ENCODE measurements at regions of chr12 and their contacts with region 1.

Region 1: GRCh38 chr12:121015825-121016766 is at the start of gene C12orf43:
- DNase-seq: peak; percentile 83 to 95 (median 92)
- ATAC-seq: peak; percentile 97
- H3K4me3 ChIP-seq: peak within 1 kb of the TSS; percentile 69 to 91
- H3K4me3 Mint-ChIP-seq: peak within 1 kb of the TSS; percentile 93
- H3K27ac ChIP-seq: peak within 1 kb of the TSS; percentile 60 to 89
- H3K27ac Mint-ChIP-seq: peak within 1 kb of the TSS; percentile 93
- H3K4me1 ChIP-seq: peaks cover 8% of the 10 kb centered on the region
- H3K4me1 Mint-ChIP-seq: peaks cover 21% of the 10 kb centered on the region
- H3K27me3 ChIP-seq: no peaks in the 10 kb centered on the region
- H3K27me3 Mint-ChIP-seq: no peaks in the 10 kb centered on the region
- CTCF ChIP-seq: no peak
- total RNA-seq, gene C12orf43: 20.7 to 21.4 TPM

Region 2: GRCh38 chr12:120562906-120563305 is 453.2 kb before region 1 on chr12:
- CTCF ChIA-PET with region 1: no interaction called
- POLR2A ChIA-PET with region 1: no interaction called
- intact Hi-C with region 1: no loop called
- DNase-seq: no peak
- ATAC-seq: no peak
- H3K4me3 ChIP-seq: no peak overlapping the region
- H3K4me3 Mint-ChIP-seq: no peak overlapping the region
- H3K27ac ChIP-seq: no peak overlapping the region
- H3K27ac Mint-ChIP-seq: peak overlapping the region; percentile 14
- H3K4me1 ChIP-seq: no peaks in the 10 kb centered on the region
- H3K4me1 Mint-ChIP-seq: no peaks in the 10 kb centered on the region
- H3K27me3 ChIP-seq: no peaks in the 10 kb centered on the region
- H3K27me3 Mint-ChIP-seq: no peaks in the 10 kb centered on the region
- CTCF ChIP-seq: no peak

Region 3: DNA sequence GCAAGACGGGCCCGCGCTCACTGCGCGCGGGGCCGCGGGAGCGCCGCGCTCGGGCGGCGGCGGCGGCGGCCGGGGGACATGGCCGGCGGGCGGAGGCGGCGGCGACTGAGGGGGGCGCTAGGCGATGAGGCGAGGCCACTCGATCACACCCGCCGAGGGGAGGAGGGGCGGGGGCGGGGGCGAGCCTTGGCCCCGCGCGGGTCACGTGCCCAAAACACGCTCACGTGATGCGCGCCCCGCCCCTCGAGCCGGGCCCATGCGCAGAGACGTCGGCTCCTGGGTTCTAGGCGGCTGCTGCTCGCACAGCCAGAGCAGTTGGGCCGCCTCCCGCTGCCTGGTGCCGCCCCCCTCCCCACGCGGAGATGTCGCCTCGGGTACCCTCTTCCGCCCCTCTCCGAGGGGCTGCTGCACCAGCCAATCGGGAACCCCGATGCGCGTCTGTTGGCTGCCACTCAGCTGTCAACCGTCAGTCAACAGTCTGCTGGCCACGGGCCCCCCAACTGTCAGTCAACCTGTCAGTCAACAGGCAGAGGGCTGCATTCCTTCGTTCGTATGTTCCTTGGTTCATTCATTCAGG is 111.8 kb before region 1 on chr12 and contains the start of gene SPPL3:
- CTCF ChIA-PET with region 1: no interaction called
- POLR2A ChIA-PET with region 1: no interaction called
- intact Hi-C with region 1: loop called in 1 of 2 experiments (anchors 1 kb)
- DNase-seq: peak; percentile 86 to 96 (median 93)
- ATAC-seq: peak; percentile 75
- H3K4me3 ChIP-seq: peak within 1 kb of the TSS; percentile 76 to 82
- H3K4me3 Mint-ChIP-seq: peak within 1 kb of the TSS; percentile 99
- H3K27ac ChIP-seq: peak within 1 kb of the TSS; percentile 66 to 84
- H3K27ac Mint-ChIP-seq: peak within 1 kb of the TSS; percentile 98
- H3K4me1 ChIP-seq: peaks cover 21% of the 10 kb centered on the region
- H3K4me1 Mint-ChIP-seq: peaks cover 32% of the 10 kb centered on the region
- H3K27me3 ChIP-seq: no peaks in the 10 kb centered on the region
- H3K27me3 Mint-ChIP-seq: no peaks in the 10 kb centered on the region
- CTCF ChIP-seq: no peak
- total RNA-seq, gene SPPL3: 42.3 to 42.9 TPM

Region 4: GRCh38 chr12:121033625-121034349 is 17.7 kb after region 1 on chr12:
- CTCF ChIA-PET with region 1: interaction called, 3 read pairs
- POLR2A ChIA-PET with region 1: no interaction called
- intact Hi-C with region 1: loop called in 1 of 2 experiments (anchors 1 kb)
- DNase-seq: peak in 8 of 9 experiments; percentile 29 to 93 (median 66)
- ATAC-seq: peak; percentile 78
- H3K4me3 ChIP-seq: peak overlapping the region in 1 of 2 experiments; percentile 35
- H3K4me3 Mint-ChIP-seq: peak overlapping the region; percentile 43
- H3K27ac ChIP-seq: peak overlapping the region; percentile 25 to 87
- H3K27ac Mint-ChIP-seq: peak overlapping the region; percentile 85
- H3K4me1 ChIP-seq: peaks cover 58% of the 10 kb centered on the region
- H3K4me1 Mint-ChIP-seq: peaks cover 51% of the 10 kb centered on the region
- H3K27me3 ChIP-seq: no peaks in the 10 kb centered on the region
- H3K27me3 Mint-ChIP-seq: no peaks in the 10 kb centered on the region
- CTCF ChIP-seq: no peak

Region 5: GRCh38 chr12:121038861-121039666 is 23.0 kb after region 1 on chr12 and contains the start of gene OASL:
- CTCF ChIA-PET with region 1: no interaction called
- POLR2A ChIA-PET with region 1: no interaction called
- intact Hi-C with region 1: loop called (anchors 1 kb)
- DNase-seq: peak; percentile 46 to 86 (median 64)
- ATAC-seq: peak; percentile 56
- H3K4me3 ChIP-seq: peak within 1 kb of the TSS; percentile 77 to 84
- H3K4me3 Mint-ChIP-seq: peak within 1 kb of the TSS; percentile 96
- H3K27ac ChIP-seq: peak within 1 kb of the TSS; percentile 58 to 87
- H3K27ac Mint-ChIP-seq: peak within 1 kb of the TSS; percentile 95
- H3K4me1 ChIP-seq: peaks cover 42% of the 10 kb centered on the region
- H3K4me1 Mint-ChIP-seq: peaks cover 45% of the 10 kb centered on the region
- H3K27me3 ChIP-seq: no peaks in the 10 kb centered on the region
- H3K27me3 Mint-ChIP-seq: no peaks in the 10 kb centered on the region
- CTCF ChIP-seq: no peak
- total RNA-seq, gene OASL: 34.5 to 36.5 TPM

Region 6: DNA sequence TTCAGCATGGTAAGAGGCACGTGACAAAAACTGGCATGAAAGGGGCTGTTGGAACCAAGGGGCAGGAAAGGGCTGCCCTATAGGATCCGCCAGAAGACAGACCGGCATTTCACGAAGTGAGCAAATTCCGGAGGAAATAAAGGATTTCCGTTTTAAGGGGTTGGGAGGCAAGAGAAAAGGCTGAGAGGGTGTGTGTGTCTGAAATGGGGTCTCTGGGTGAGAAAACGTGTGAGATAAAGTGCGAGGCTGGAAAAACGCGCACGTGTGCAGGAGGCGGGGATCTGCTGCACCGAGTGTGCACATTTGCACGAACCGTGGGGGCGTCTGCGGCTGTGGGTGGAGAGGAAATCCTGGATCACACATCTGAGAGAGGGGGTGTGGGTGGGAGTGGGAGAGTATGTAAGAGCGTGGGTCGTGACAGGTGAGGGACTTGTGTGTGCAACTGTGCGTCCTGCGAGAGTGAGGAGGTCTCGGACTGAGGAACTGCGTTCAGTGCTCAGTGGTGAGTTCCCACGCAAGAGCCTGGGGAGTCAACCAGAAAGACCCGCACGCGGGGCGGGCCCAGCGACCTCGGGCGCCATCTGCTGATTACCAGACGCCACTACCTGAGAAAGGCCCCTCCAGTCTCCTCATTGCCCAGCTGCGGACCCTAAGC is 79.6 kb after region 1 on chr12:
- CTCF ChIA-PET with region 1: no interaction called
- POLR2A ChIA-PET with region 1: interaction called, 3 read pairs
- intact Hi-C with region 1: loop called (anchors 1 to 5 kb)
- DNase-seq: peak; percentile 59 to 88 (median 81)
- ATAC-seq: peak; percentile 78
- H3K4me3 ChIP-seq: peak overlapping the region; percentile 44 to 47
- H3K4me3 Mint-ChIP-seq: peak overlapping the region; percentile 81
- H3K27ac ChIP-seq: no peak overlapping the region
- H3K27ac Mint-ChIP-seq: no peak overlapping the region
- H3K4me1 ChIP-seq: peaks cover 47% of the 10 kb centered on the region
- H3K4me1 Mint-ChIP-seq: peaks cover 49% of the 10 kb centered on the region
- H3K27me3 ChIP-seq: no peaks in the 10 kb centered on the region
- H3K27me3 Mint-ChIP-seq: no peaks in the 10 kb centered on the region
- CTCF ChIP-seq: peak; percentile 81

Region 7: DNA sequence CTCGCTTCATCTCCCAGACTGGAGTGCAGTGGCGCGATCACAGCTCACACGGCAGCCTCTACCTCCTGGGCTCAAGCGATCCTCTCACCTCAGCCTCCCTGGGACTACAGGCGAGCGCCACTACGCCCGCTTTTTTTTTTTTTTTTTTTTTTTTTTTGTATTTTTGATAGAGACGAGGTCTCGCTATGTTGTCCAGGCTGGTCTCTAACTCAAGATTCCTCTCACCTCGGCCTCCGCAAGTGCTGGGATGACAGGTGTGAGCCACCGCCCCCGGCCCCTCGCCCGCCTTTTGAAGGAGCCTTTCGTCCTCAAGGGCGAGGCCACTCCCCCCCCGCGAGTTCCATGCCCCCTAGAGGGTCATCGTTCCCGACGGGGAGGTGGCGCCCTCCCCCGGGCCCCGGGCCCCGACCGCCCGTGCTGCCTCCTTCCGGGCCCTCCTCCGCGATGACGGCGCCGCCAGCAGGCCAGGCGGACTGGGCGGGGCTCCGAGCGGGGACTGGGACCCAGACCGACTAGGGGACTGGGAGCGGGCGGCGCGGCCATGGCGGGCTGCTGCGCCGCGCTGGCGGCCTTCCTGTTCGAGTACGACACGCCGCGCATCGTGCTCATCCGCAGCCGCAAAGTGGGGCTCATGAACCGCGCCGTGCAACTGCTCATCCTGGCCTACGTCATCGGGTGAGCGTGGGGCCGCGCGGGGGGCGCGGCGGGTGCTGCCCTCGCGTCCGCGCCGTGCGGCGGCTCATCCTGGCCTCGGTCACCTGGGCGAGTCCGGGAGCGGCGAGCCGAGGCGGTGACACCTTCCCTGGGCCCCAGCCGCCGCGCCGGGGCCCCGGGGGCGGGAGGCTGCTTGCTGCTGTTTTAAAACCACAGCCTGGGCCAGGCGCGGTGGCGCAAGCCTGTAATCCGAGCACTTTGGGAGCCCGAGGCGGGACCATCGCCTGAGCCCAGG is 193.8 kb after region 1 on chr12 and contains the start of gene P2RX4:
- CTCF ChIA-PET with region 1: no interaction called
- POLR2A ChIA-PET with region 1: no interaction called
- intact Hi-C with region 1: loop called (anchors 10 kb)
- DNase-seq: peak; percentile 72 to 96 (median 88)
- ATAC-seq: peak; percentile 86
- H3K4me3 ChIP-seq: peak within 1 kb of the TSS; percentile 60 to 66
- H3K4me3 Mint-ChIP-seq: peak within 1 kb of the TSS; percentile 78
- H3K27ac ChIP-seq: peak within 1 kb of the TSS; percentile 85 to 86
- H3K27ac Mint-ChIP-seq: peak within 1 kb of the TSS; percentile 92
- H3K4me1 ChIP-seq: peaks cover 16% of the 10 kb centered on the region
- H3K4me1 Mint-ChIP-seq: peaks cover 24% of the 10 kb centered on the region
- H3K27me3 ChIP-seq: no peaks in the 10 kb centered on the region
- H3K27me3 Mint-ChIP-seq: no peaks in the 10 kb centered on the region
- CTCF ChIP-seq: no peak
- total RNA-seq, gene P2RX4: 27.5 to 29.8 TPM

Measured in CD8-positive, alpha-beta T cell (primary cell).